ENCODE measurements at regions of chr16 and their contacts with region 1.

Region 1: GRCh38 chr16:75555707-75556430 is at the start of gene TMEM231:
- DNase-seq: peak; percentile 89
- ATAC-seq: peak; percentile 94
- H3K4me3 Mint-ChIP-seq: peak within 1 kb of the TSS; percentile 93
- H3K27ac Mint-ChIP-seq: peak within 1 kb of the TSS; percentile 89
- H3K4me1 Mint-ChIP-seq: peaks cover 10% of the 10 kb centered on the region
- H3K27me3 Mint-ChIP-seq: no peaks in the 10 kb centered on the region
- CTCF ChIP-seq: no peak
- total RNA-seq, gene TMEM231: 4.0 and 4.1 TPM in 2 replicates

Region 2: DNA sequence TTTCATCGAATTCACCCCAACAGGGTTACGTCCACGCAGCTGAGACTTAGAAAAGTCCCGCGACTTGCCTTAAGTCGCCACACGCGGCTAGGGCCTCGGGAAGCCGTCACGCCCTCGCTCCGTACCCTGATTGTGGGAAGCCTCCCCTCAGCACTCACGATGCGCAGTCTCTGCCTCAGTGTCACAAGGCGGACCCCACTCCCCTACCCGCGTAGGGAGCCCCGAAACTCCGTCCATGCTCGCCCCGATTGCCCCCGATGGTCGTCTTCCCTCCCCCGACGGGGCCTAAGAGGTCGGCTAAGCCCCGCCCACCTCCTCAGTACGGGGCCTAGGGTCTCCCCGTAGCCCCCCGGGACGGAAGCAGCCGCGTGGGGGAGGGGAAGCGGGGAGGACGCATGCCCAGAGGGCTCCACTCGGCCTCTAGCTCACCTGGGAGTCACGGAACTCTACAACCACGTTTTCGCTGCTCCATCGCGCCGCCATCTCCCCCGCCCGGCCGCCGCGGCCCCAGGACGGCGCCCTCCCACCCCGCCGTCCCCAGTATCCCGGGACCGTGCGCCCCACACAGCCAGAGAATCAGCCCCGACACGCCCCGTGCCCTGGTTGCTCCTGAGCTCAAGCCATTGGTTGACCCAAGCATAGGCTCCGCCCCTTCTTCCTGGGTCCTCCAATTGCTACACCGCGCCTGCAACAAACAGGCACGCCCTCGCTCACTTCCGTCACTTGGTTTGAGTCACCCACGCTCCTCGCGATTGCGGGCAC is 571.2 kb before region 1 on chr16 and contains the start of gene WDR59:
- CTCF ChIA-PET with region 1: no interaction called
- POLR2A ChIA-PET with region 1: no interaction called
- intact Hi-C with region 1: loop called (anchors 5 kb)
- DNase-seq: peak; percentile 90
- ATAC-seq: peak; percentile 99
- H3K4me3 Mint-ChIP-seq: peak within 1 kb of the TSS; percentile 96
- H3K27ac Mint-ChIP-seq: peak within 1 kb of the TSS; percentile 88
- H3K4me1 Mint-ChIP-seq: peaks cover 20% of the 10 kb centered on the region
- H3K27me3 Mint-ChIP-seq: no peaks in the 10 kb centered on the region
- CTCF ChIP-seq: no peak
- total RNA-seq, gene WDR59: 80.8 and 93.3 TPM in 2 replicates

Region 3: GRCh38 chr16:75464130-75464918 is 91.5 kb before region 1 on chr16 and contains the start of gene TMEM170A:
- CTCF ChIA-PET with region 1: no interaction called
- POLR2A ChIA-PET with region 1: no interaction called
- intact Hi-C with region 1: loop called (anchors 1 kb)
- DNase-seq: peak; percentile 98
- ATAC-seq: peak; percentile 95
- H3K4me3 Mint-ChIP-seq: peak within 1 kb of the TSS; percentile 92
- H3K27ac Mint-ChIP-seq: peak within 1 kb of the TSS; percentile 89
- H3K4me1 Mint-ChIP-seq: peaks cover 41% of the 10 kb centered on the region
- H3K27me3 Mint-ChIP-seq: no peaks in the 10 kb centered on the region
- CTCF ChIP-seq: peak; percentile 99
- total RNA-seq, gene TMEM170A: 25.3 and 28.3 TPM in 2 replicates

Region 4: DNA sequence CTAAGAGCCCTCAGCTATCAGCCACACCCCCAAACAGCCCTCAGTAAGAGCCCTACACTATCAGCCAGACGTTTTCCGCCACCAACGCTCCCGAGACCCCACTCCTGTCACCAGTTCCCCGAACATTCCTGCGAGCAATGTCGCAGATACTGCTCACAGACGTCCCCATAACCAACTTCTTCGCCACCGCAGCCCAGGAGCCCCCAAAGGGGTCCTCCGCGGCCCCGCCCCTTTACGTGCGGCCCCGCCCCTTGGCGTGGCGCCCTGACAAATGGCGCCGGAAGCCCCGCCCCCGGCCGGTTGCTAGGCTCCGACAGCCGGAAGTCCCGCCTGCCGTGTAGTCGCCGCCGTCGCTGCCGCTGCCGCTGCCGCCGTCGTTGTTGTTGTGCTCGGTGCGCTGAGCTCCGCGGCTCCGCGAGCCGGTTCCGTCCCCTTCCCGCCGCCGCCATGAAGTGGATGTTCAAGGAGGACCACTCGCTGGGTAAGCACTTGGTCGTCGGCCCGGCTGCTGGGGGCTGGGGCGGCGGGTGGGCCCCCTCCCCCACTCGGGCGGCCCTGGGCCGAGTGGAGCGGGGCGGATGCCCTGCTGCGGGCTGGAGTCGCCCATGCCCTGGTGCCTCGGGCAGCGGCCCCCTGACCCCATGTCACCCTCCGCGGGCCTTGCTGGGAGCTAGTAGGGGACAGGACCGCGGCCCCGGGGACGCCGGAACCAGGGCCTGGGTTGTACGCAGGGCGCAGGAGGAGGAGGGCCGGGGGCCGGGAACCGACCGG is 10.4 kb after region 1 on chr16 and contains the start of gene GABARAPL2:
- CTCF ChIA-PET with region 1: no interaction called
- POLR2A ChIA-PET with region 1: interaction called, 18 read pairs
- intact Hi-C with region 1: loop called (anchors 1 kb)
- DNase-seq: peak; percentile 98
- ATAC-seq: peak; percentile 69
- H3K4me3 Mint-ChIP-seq: peak within 1 kb of the TSS; percentile 100
- H3K27ac Mint-ChIP-seq: peak within 1 kb of the TSS; percentile 98
- H3K4me1 Mint-ChIP-seq: peaks cover 57% of the 10 kb centered on the region
- H3K27me3 Mint-ChIP-seq: no peaks in the 10 kb centered on the region
- CTCF ChIP-seq: no peak
- total RNA-seq, gene GABARAPL2: 62.9 and 69.4 TPM in 2 replicates

Region 5: DNA sequence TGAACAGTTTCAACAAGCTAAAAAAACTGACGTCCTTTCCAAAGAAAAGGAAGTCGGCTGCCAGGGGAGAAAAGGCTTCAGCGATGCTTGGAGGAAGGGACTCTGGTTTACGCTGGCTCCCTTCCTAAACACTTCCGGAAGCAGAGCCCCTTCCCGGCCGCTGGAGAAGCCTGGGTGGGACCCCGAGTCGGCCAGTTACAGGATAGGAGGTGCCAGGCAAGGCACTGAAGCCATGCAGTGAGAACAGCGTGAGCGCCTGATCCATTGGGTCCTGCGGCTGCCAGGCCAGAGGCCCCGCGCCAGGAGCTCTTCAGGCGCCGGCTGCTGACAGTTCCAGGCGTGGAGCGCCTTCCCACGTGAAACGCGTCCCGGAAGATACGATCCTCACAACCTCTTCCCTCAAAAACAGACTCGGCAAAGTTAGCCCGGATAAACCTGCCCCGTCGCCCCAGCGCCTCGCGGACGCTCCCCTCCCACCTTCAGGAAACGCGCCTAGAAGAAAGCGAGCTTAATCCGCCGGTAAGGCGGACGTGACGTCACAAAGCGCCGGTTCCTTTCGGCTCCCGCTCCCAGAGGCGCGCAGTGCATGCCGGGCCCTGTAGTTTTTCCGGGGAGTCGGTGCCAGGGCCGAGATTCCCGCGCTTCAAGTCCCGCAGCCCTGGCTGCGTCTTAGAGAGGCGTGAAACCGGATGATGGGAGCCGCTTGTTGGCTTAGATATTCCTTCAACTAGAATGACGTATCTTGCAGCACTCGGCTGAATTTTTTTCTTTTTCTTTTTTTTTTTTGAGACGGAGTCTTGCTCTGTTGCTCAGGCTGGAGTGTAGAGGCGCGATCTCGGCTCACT is 67.1 kb after region 1 on chr16 and contains the start of gene ADAT1:
- CTCF ChIA-PET with region 1: no interaction called
- POLR2A ChIA-PET with region 1: interaction called, 10 read pairs
- intact Hi-C with region 1: loop called (anchors 1 kb)
- DNase-seq: peak; percentile 93
- ATAC-seq: peak; percentile 97
- H3K4me3 Mint-ChIP-seq: peak within 1 kb of the TSS; percentile 98
- H3K27ac Mint-ChIP-seq: peak within 1 kb of the TSS; percentile 95
- H3K4me1 Mint-ChIP-seq: peaks cover 22% of the 10 kb centered on the region
- H3K27me3 Mint-ChIP-seq: no peaks in the 10 kb centered on the region
- CTCF ChIP-seq: no peak
- total RNA-seq, gene ADAT1: 52.7 and 57.2 TPM in 2 replicates

Measured in activated B cell treated with CpG ODN at 0.5 μM for 24 hours (primary cell).